ENCODE measurements at regions of chr19 and their contacts with region 1.

Region 1: GRCh38 chr19:45477713-45478453 is 10.1 kb downstream of the FOSB start:
- DNase-seq: no peak
- H3K4me3 ChIP-seq: peak overlapping the region in 1 of 3 donors; percentile 16
- H3K27ac ChIP-seq: peak overlapping the region in 2 of 3 donors; percentile 91 to 99
- H3K4me1 ChIP-seq: peaks cover 5 to 19% of the 10 kb centered on the region in 2 donors
- H3K27me3 ChIP-seq: no peaks in the 10 kb centered on the region
- CTCF ChIP-seq: no peak
- POLR2A ChIP-seq: no peak

Region 2: GRCh38 chr19:45254037-45254531 is 223.8 kb before region 1 on chr19:
- intact Hi-C with region 1: no loop called
- DNase-seq: no peak
- H3K4me3 ChIP-seq: no peak overlapping the region
- H3K27ac ChIP-seq: no peak overlapping the region
- H3K4me1 ChIP-seq: peaks cover 21 to 29% of the 10 kb centered on the region in 2 donors
- H3K27me3 ChIP-seq: no peaks in the 10 kb centered on the region
- CTCF ChIP-seq: no peak
- POLR2A ChIP-seq: no peak

Region 3: DNA sequence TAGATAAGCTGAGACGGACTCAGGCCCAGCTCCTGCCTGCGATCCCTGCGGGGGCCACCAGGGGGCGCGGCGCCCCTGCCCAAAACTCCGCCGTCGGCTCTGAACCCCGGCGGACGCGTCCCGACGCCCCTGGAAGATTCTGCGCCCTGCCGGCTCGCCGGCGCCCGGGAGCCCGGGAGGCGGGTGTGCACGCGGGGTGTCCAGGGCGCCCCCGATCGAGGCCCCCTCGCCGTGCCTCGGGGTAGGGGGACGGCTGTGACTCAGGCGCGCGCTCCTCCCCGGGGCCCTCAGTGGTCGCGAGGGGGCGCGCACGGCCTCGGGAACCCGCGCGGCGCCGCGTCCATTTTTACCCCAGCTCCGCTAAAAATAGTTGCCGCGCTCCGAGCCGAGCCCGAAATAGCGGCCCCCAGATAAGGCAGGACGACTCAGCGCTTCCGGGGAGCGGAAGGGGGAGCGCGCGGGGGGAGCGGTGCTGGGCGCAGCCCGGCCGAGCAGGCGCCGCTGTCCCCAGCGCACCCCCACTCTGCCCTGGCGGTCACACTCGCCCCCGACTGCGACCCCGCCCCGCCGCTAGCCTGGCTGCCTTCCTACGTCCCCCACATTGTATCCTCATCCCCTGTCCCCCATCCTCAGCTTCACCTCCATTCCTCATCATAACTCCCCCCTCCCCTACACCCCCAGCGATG is 38.2 kb before region 1 on chr19:
- intact Hi-C with region 1: loop called (anchors 2 kb)
- DNase-seq: peak; percentile 75 to 78
- H3K4me3 ChIP-seq: peak overlapping the region in 2 of 3 donors; percentile 61 to 87
- H3K27ac ChIP-seq: peak overlapping the region; percentile 95 to 97 (median 96)
- H3K4me1 ChIP-seq: peaks cover 10 to 16% of the 10 kb centered on the region in 2 donors
- H3K27me3 ChIP-seq: no peaks in the 10 kb centered on the region
- CTCF ChIP-seq: peak; percentile 80 to 100 (median 98)
- POLR2A ChIP-seq: peak in 1 of 2 donors; percentile 22